Adrenal gland (tissue), 19 donors: ENCODE measurements at regions of chr2 and their contacts with region 1.

Region 1: GRCh38 chr2:231557571-231558237 is 27.5 kb upstream of the NMUR1 start:
- DNase-seq: peak; percentile 58 to 86 (median 73)
- H3K4me3 ChIP-seq: no peak overlapping the region
- H3K27ac ChIP-seq: peak overlapping the region in 2 of 5 donors; percentile 52 to 75
- H3K4me1 ChIP-seq: no peaks in the 10 kb centered on the region
- H3K27me3 ChIP-seq: no peaks in the 10 kb centered on the region
- CTCF ChIP-seq: peak; percentile 33 to 89 (median 65)
- POLR2A ChIP-seq: no peak

Region 2: DNA sequence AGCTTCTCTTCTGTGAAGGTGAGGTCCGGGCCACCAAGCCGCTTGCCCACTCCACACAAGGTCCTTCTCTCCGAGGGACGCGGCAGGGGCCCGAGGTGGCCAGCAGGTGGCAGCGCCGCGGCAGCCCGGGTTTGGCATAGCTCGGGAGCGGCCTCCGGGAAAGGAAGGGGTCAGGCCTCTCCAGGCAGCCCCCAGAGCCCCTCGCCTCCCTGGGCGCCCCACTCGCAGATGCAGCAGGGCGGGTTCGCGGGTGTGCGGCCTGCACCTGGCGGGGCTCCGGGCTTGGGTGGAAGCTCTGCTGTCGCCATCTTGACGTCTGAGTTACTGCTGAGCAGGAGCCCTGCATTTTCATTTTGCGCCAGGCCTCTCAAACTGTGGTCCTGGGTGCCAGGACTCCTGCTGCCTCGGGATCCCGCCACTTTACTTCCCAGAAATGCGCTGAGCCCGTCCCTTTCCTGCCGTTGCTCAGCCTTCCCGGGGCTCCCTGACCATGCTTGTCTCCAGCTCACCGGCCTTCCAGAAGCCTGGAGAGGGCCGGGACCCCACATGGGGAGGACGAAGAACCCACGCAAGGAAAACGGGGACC is 74.8 kb before region 1 on chr2:
- intact Hi-C with region 1: loop called (anchors 5 kb)
- DNase-seq: peak; percentile 76 to 86 (median 77)
- H3K4me3 ChIP-seq: peak overlapping the region in 2 of 4 donors; percentile 14 to 49
- H3K27ac ChIP-seq: peak overlapping the region in 3 of 5 donors; percentile 41 to 69 (median 67)
- H3K4me1 ChIP-seq: no peaks in the 10 kb centered on the region
- H3K27me3 ChIP-seq: no peaks in the 10 kb centered on the region
- CTCF ChIP-seq: peak; percentile 71 to 92 (median 84)
- POLR2A ChIP-seq: no peak

Region 3: GRCh38 chr2:231522799-231523180 is 34.9 kb before region 1 on chr2:
- intact Hi-C with region 1: loop called (anchors 5 kb)
- DNase-seq: no peak
- H3K4me3 ChIP-seq: no peak overlapping the region
- H3K27ac ChIP-seq: no peak overlapping the region
- H3K4me1 ChIP-seq: no peaks in the 10 kb centered on the region
- H3K27me3 ChIP-seq: no peaks in the 10 kb centered on the region
- CTCF ChIP-seq: no peak
- POLR2A ChIP-seq: no peak

Region 4: GRCh38 chr2:231604685-231605606 is 47.2 kb after region 1 on chr2:
- intact Hi-C with region 1: loop called (anchors 5 kb)
- DNase-seq: peak; percentile 99 to 100 (median 100)
- H3K4me3 ChIP-seq: peak overlapping the region in 1 of 4 donors; percentile 62
- H3K27ac ChIP-seq: peak overlapping the region; percentile 84 to 99 (median 96)
- H3K4me1 ChIP-seq: peaks cover 13 to 23% of the 10 kb centered on the region in 2 donors
- H3K27me3 ChIP-seq: no peaks in the 10 kb centered on the region
- CTCF ChIP-seq: peak in 1 of 6 experiments; percentile 3
- POLR2A ChIP-seq: peak; percentile 61 to 66

Region 5: GRCh38 chr2:231701456-231702373 is 144.0 kb after region 1 on chr2:
- intact Hi-C with region 1: no loop called
- DNase-seq: peak in 6 of 7 donors; percentile 81 to 91 (median 86)
- H3K4me3 ChIP-seq: no peak overlapping the region
- H3K27ac ChIP-seq: peak overlapping the region; percentile 4 to 76 (median 54)
- H3K4me1 ChIP-seq: peaks cover 16 to 20% of the 10 kb centered on the region in 2 donors
- H3K27me3 ChIP-seq: no peaks in the 10 kb centered on the region
- CTCF ChIP-seq: no peak
- POLR2A ChIP-seq: no peak